ENCODE measurements at regions of chr10 and their contacts with region 1.

Region 1: DNA sequence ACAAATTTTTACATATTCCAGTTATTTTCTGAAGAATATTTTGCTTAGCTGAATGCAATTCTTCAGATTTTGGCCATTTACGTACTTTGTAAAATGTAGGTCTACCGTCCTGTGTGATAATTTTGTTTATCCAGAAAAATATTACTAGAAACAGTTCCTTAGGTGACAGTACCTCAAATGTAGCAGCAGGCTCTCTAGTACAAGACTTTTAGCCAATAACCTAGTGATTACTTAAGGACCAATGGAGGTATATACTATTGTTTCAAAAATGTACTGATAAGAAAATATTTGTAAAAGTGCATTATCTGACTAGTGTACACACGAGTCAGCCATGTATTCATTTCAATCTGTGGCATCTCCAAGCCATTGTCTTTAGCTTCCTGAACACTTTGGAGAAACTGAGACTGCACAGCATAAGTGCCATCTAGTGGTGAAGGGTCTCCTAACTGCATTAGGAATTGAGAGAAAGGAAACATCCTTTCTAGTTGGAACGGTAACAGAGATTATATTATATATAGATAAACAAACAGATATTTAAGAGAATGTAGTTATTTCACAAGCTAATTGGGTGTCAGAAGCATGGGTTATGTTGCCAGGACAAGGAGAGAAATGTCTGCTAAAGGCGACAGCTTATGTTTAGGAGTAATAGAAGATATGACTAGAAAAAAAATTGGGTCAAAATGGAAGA is 23.7 kb downstream of the RTKN2 start:
- DNase-seq: peak; percentile 47
- H3K4me3 Mint-ChIP-seq: peak overlapping the region; percentile 60
- H3K27ac Mint-ChIP-seq: peak overlapping the region; percentile 45
- H3K4me1 Mint-ChIP-seq: peaks cover 45% of the 10 kb centered on the region
- H3K27me3 Mint-ChIP-seq: no peaks in the 10 kb centered on the region

Region 2: DNA sequence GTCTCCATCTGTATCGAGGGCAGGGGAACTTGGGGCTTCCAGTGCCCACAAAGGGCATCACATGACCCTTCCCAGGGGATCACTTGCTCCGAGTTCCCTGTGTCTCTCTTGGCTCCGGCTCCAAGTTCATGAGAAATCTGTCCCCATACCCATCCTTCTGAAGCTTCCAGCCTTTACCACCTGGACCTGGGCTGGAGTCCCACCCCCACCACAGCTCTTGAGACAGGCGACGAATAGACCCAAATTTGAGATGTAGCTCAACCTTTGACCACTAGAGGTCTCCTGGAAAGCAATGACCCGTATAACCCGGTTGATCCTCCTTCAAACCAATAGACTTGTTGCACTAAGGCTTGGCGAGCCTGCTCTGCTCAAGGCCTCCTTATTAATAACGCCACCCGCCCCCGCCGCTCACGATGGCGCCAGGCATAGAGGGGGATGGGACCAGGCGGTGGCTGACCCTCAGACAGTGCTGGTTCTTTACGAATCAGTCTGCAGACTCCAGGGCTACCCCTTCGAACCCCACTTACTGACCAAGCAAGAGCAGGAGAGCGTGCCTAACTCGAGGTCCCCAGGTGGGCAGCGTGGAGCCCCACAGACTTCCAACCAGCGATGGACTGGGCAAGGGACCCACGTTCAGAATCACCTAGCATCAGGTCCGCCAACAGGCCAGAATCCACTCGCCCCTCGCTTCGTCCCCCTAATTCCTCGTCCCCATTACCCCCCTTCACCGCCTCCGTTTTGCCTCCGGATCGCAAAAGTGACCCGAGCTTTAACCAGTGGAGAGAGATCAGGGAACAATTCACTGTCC is 347.9 kb before region 1 on chr10:
- intact Hi-C with region 1: loop called (anchors 1 kb)
- DNase-seq: peak; percentile 56
- H3K4me3 Mint-ChIP-seq: peak overlapping the region; percentile 87
- H3K27ac Mint-ChIP-seq: peak overlapping the region; percentile 90
- H3K4me1 Mint-ChIP-seq: peaks cover 38% of the 10 kb centered on the region
- H3K27me3 Mint-ChIP-seq: peaks cover 3% of the 10 kb centered on the region

Region 3: GRCh38 chr10:61992671-61993668 is 252.0 kb before region 1 on chr10:
- intact Hi-C with region 1: loop called (anchors 1 kb)
- DNase-seq: peak; percentile 69
- H3K4me3 Mint-ChIP-seq: peak overlapping the region; percentile 76
- H3K27ac Mint-ChIP-seq: peak overlapping the region; percentile 90
- H3K4me1 Mint-ChIP-seq: peaks cover 86% of the 10 kb centered on the region
- H3K27me3 Mint-ChIP-seq: no peaks in the 10 kb centered on the region

Region 4: DNA sequence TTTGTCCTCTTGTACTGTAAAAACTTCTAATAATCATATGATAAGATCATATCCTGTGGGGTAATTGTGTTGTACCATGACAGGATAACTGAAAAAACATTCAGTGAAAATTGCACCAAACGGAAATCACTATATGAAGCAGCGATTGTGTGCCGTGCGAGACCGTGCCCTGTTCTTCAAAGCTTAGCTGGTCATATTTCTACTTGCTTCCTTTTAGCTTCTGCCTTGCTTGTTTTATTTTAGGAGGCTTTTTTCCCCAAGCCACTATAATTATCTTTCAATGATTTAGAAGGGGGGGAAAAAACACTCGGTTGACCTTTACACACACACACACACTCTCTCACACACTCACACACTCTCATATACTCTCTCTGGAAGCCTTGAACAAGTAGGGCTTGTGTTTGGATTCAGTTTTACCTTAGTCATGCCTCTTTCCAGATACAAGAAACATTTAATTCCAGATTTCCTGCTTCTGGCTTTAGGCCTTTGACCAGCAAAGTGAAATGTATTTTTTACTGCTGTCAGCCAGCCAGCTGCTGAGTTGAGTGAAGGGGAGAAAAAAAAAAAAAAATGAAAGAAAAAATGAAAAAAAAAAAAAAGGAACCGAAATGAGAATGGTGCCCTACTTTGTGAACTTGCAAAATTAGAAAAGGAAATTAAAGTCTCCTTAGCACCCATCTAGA is 162.1 kb before region 1 on chr10:
- intact Hi-C with region 1: loop called (anchors 1 kb)
- DNase-seq: peak; percentile 26
- H3K4me3 Mint-ChIP-seq: peak overlapping the region; percentile 78
- H3K27ac Mint-ChIP-seq: peak overlapping the region; percentile 84
- H3K4me1 Mint-ChIP-seq: peaks cover 72% of the 10 kb centered on the region
- H3K27me3 Mint-ChIP-seq: no peaks in the 10 kb centered on the region